Dendritic cell treated with granulocyte-macrophage colony-stimulating factor and Interleukin-4, amounts not matched to agents 40 ng/mL and 50 ng/mL, for 4 days (primary cell): ENCODE measurements at regions of chr6 and their contacts with region 1.

Region 1: DNA sequence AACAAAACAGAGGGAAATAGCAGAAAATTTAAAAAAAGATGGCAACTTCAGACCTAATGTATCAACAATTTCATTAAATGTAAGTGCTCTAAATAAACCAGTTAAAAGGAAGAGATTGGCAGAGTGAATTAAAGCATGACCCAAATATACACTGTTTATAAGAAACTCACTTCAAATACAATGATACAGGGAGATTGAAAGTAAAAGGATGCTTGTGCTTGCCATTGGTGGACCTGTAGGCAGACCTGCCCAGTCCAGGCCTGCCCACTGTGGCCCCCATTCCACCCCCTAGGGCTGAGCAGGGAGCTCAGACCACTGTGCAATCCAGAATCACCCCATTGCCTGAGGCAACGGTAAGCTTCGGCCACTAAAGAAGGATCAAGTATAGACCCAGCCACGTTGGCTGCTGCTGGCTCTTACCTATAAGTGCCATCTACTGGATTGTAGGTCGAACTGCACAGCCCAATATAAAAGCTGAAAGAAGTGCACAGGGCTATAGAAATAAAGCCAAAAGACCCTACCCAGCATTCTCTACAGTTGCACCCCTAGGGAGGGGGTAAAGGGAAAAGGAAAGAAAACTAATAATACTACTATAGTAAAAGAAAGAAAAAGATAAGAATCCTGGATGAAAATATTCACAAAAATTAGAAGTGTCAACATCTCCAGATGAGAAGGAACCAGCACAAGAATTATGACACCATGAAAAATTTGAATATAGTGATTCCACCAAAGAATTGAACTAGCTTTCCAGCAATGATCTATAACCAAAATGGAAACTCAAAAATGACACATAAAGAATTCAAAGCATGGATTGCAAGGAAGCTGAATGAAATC is 36.1 kb downstream of the PSMB1 start:
- H3K4me3 Mint-ChIP-seq: no peak overlapping the region
- H3K27ac Mint-ChIP-seq: no peak overlapping the region
- H3K4me1 Mint-ChIP-seq: peaks cover 4% of the 10 kb centered on the region
- H3K27me3 Mint-ChIP-seq: peaks cover 15% of the 10 kb centered on the region

Region 2: GRCh38 chr6:169789982-169790927 is 726.7 kb before region 1 on chr6:
- intact Hi-C with region 1: loop called (anchors 5 kb)
- H3K4me3 Mint-ChIP-seq: peak overlapping the region; percentile 66
- H3K27ac Mint-ChIP-seq: no peak overlapping the region
- H3K4me1 Mint-ChIP-seq: peaks cover 13% of the 10 kb centered on the region
- H3K27me3 Mint-ChIP-seq: peaks cover 34% of the 10 kb centered on the region

Region 3: GRCh38 chr6:169831450-169832246 is 685.4 kb before region 1 on chr6:
- intact Hi-C with region 1: loop called (anchors 1 kb)
- H3K4me3 Mint-ChIP-seq: no peak overlapping the region
- H3K27ac Mint-ChIP-seq: no peak overlapping the region
- H3K4me1 Mint-ChIP-seq: peaks cover 7% of the 10 kb centered on the region
- H3K27me3 Mint-ChIP-seq: peaks cover 25% of the 10 kb centered on the region

Region 4: DNA sequence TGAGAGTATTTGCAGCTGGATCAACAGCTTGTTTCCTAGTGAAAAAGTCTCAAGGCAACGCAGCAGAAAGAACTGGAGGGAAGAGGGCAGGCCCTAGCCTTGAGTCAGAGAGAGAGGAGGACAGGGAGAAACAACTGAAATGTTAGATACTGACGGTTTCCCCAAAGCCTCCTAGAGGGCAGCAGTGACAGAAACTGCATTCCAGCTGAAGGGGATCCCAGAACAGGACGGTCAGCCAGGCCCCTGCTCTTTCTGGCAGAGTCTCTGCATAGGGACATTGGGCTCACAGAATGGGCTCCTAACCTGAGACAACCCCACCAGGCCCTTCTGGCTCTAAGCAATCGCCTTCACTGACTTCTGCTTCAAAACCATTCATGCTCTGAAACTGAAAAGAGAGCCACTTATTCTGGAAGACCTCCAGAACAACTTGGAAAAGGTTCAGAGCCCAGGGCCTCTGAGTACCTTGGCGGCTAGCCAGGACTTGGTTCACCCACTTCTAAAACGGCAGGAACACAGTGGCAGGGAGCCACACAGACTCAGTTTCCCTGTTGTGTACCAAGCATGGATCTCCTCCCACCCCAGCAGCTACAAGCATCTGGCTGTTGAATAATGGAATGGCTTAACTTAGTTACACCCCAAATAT is 36.8 kb before region 1 on chr6:
- intact Hi-C with region 1: no loop called
- H3K4me3 Mint-ChIP-seq: no peak overlapping the region
- H3K27ac Mint-ChIP-seq: no peak overlapping the region
- H3K4me1 Mint-ChIP-seq: peaks cover 6% of the 10 kb centered on the region
- H3K27me3 Mint-ChIP-seq: no peaks in the 10 kb centered on the region